Breast epithelium (tissue), 4 donors: ENCODE measurements at regions of chr2 and their contacts with region 1.

Region 1: DNA sequence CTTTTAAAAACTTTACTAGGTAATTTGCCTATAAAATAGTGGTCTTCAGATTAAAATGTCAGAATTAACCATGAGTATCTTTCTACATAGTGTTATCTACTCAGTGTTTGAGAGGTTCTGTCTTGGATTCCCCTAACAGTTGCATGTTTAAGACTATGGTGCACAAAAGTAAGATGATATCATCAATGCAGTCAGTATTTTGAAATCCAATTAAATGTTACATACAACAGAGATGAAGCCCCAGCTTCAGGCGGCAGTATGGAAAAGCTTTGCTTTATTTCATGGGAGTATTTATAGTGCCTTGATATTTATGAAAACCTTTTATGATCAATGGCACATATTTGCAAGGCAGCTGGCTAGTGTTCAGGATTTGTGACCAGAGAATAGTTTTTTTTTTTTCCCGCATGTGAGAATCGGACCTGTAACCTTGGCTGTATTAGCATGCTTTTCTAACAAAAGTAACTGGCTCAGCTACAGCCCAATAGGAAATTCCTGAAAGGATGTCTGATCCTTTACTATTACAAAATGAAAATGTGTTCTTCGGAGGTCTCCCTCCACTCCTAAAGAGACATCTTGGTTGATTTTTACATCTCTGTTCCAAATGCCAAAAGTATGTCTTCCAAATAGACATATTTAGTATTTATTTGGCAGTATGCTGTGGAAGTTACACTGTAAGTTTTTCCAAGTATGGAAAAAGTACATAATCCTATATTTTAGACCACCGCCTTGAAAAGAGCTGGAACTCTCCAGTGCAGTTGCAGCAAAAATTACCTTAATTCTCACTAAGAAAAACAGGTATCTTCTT is 319.3 kb upstream of the UBE2E3 start:
- DNase-seq: no peak
- H3K4me3 ChIP-seq: no peak overlapping the region
- H3K27ac ChIP-seq: no peak overlapping the region
- H3K4me1 ChIP-seq: no peaks in the 10 kb centered on the region
- H3K27me3 ChIP-seq: no peaks in the 10 kb centered on the region
- CTCF ChIP-seq: no peak
- POLR2A ChIP-seq: no peak

Region 2: GRCh38 chr2:179805001-179805400 is 856.1 kb before region 1 on chr2:
- intact Hi-C with region 1: no loop called
- DNase-seq: no peak
- H3K4me3 ChIP-seq: no peak overlapping the region
- H3K27ac ChIP-seq: no peak overlapping the region
- H3K4me1 ChIP-seq: no peaks in the 10 kb centered on the region
- H3K27me3 ChIP-seq: no peaks in the 10 kb centered on the region
- CTCF ChIP-seq: no peak
- POLR2A ChIP-seq: no peak

Region 3: GRCh38 chr2:180679693-180680092 is 18.6 kb after region 1 on chr2:
- intact Hi-C with region 1: loop called (anchors 2 kb)
- DNase-seq: no peak
- H3K4me3 ChIP-seq: no peak overlapping the region
- H3K27ac ChIP-seq: no peak overlapping the region
- H3K4me1 ChIP-seq: no peaks in the 10 kb centered on the region
- H3K27me3 ChIP-seq: no peaks in the 10 kb centered on the region
- CTCF ChIP-seq: no peak
- POLR2A ChIP-seq: no peak

Region 4: GRCh38 chr2:180690611-180691010 is 29.5 kb after region 1 on chr2:
- intact Hi-C with region 1: no loop called
- DNase-seq: no peak
- H3K4me3 ChIP-seq: no peak overlapping the region
- H3K27ac ChIP-seq: no peak overlapping the region
- H3K4me1 ChIP-seq: no peaks in the 10 kb centered on the region
- H3K27me3 ChIP-seq: no peaks in the 10 kb centered on the region
- CTCF ChIP-seq: no peak
- POLR2A ChIP-seq: no peak

Region 5: GRCh38 chr2:180716186-180717180 is 55.4 kb after region 1 on chr2:
- intact Hi-C with region 1: no loop called
- DNase-seq: no peak
- H3K4me3 ChIP-seq: no peak overlapping the region
- H3K27ac ChIP-seq: no peak overlapping the region
- H3K4me1 ChIP-seq: no peaks in the 10 kb centered on the region
- H3K27me3 ChIP-seq: no peaks in the 10 kb centered on the region
- CTCF ChIP-seq: no peak
- POLR2A ChIP-seq: no peak